ENCODE measurements at regions of chr9 and their contacts with region 1.

Region 1: GRCh38 chr9:99368341-99369323 is 146.6 kb downstream of the SEC61B start:
- DNase-seq: peak; percentile 83
- ATAC-seq: peak; percentile 82
- H3K4me3 ChIP-seq: peak overlapping the region; percentile 32
- H3K27ac ChIP-seq: peak overlapping the region; percentile 13
- H3K4me1 ChIP-seq: peaks cover 24% of the 10 kb centered on the region
- H3K27me3 ChIP-seq: no peaks in the 10 kb centered on the region
- CTCF ChIP-seq: no peak
- POLR2A ChIP-seq: 0 out of 2 replicates have a peak, but pooled peaks have one; percentile 11
- RAD21 ChIP-seq: no peak

Region 2: GRCh38 chr9:99491408-99492158 is 123.0 kb after region 1 on chr9:
- CTCF ChIA-PET with region 1: no interaction called
- POLR2A ChIA-PET with region 1: no interaction called
- dilution Hi-C with region 1: no loop called
- in situ Hi-C with region 1: no loop called
- intact Hi-C with region 1: loop called (anchors 10 kb)
- DNase-seq: peak; percentile 70
- ATAC-seq: peak; percentile 38
- H3K4me3 ChIP-seq: no peak overlapping the region
- H3K27ac ChIP-seq: peak overlapping the region; percentile 10; the same call in 1 of the 2 replicates
- H3K4me1 ChIP-seq: peaks cover 7% of the 10 kb centered on the region
- H3K27me3 ChIP-seq: no peaks in the 10 kb centered on the region; the same call in 1 of the 2 replicates
- CTCF ChIP-seq: no peak
- POLR2A ChIP-seq: no peak
- RAD21 ChIP-seq: no peak